Ascending aorta (tissue), 2 donors: ENCODE measurements at regions of chr15 and their contacts with region 1.

Region 1: DNA sequence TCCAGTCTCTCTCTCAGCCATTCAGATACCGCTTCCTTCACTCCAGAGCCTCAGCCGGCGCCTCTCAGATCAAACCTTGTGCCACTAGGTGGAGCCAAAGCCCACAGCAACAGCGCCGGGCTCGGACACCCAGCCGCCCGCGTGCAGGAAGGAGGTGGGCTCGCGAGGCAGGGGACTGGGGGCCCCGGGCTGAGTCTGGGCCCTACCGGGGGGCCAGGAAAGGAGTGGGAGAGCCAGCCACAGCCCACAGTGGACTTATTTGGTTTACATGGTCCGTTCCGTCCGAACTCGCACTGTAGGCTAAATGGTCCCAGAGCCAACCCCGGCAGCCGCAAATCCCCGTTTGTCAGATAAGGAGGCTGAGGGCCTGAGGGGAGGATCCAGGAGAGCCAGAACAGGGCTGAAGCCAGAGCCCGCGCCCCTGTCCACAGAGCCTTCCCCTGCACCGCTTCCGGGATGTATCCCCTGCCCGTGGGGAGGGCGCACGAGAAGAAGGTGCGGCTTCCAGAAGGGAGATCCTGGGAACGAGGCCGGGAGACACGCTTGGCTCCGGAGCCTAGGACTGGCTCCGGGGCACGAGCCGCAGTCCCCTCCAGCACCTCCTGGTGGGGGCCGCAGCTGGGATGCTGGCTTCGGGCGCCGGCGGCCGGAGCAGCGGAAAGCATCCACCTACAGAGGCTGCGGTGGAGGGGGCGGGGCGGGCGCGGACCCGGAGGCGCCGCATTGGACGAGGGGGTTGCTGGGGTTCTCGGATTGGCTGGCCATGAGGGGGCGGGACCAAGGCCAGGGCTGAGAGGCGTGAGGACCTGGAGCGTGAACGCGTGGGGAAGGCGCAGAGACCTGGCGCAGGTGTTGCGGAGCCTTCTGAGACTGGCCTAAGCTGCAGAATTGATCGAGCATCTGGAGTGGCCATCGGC is 6.5 kb upstream of the CYP11A1 start:
- DNase-seq: peak; percentile 75 to 96
- H3K4me3 ChIP-seq: peak overlapping the region; percentile 63 to 84
- H3K27ac ChIP-seq: peak overlapping the region; percentile 22 to 34
- H3K4me1 ChIP-seq: peaks cover 4 to 12% of the 10 kb centered on the region in 2 donors
- H3K27me3 ChIP-seq: no peaks in the 10 kb centered on the region
- CTCF ChIP-seq: peak; percentile 82 to 90 (median 87)

Region 2: GRCh38 chr15:74193305-74193718 is 180.7 kb before region 1 on chr15:
- intact Hi-C with region 1: no loop called
- DNase-seq: no peak
- H3K4me3 ChIP-seq: no peak overlapping the region
- H3K27ac ChIP-seq: no peak overlapping the region
- H3K4me1 ChIP-seq: peaks cover 0 to 3% of the 10 kb centered on the region in 2 donors
- H3K27me3 ChIP-seq: no peaks in the 10 kb centered on the region
- CTCF ChIP-seq: no peak

Region 3: GRCh38 chr15:74438721-74439316 is 64.8 kb after region 1 on chr15:
- intact Hi-C with region 1: loop called (anchors 1 kb)
- DNase-seq: peak in 1 of 2 donors; percentile 80
- H3K4me3 ChIP-seq: no peak overlapping the region
- H3K27ac ChIP-seq: no peak overlapping the region
- H3K4me1 ChIP-seq: peaks cover 0 to 6% of the 10 kb centered on the region in 2 donors
- H3K27me3 ChIP-seq: no peaks in the 10 kb centered on the region
- CTCF ChIP-seq: peak; percentile 79 to 89 (median 87)

Region 4: DNA sequence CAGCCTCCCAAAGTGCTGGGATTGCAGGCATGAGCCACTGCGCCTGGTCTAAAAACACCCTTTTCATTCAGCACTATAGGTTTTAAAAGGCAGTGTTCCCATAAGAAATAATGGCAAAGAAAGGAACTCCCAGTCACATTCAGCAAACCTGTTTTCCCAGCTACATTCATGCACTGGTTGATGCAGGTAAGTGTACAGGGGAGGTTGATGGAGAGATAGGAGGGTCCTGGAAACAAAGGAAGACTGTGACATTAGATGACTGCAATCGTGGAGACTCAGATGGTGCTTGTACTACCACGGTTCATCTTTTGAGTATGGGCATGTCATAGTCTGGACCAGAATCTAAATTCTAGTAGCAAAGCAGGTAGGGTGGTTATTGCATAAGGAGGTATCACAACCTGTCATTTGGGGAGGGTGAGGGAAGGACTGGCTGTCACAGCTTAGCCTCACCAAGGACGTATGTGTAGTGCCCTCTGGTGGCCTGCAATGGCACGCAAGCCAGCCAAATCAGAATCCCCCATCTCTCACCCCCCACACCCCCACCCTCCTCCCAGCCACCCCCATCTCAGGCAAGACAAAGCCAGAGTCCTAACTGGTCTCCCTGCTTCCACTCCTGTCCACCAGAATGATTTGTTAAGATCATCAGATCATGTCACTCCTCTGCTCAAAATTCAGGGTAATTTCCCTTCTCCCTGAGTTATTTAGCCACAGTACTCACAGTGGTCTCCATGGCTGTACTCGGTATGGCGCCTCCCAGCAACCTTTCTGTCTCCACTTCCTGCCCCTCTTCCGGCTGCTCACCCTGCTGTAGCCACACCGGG is 115.7 kb after region 1 on chr15:
- intact Hi-C with region 1: loop called (anchors 1 kb)
- DNase-seq: peak in 1 of 2 donors; percentile 64
- H3K4me3 ChIP-seq: no peak overlapping the region
- H3K27ac ChIP-seq: no peak overlapping the region
- H3K4me1 ChIP-seq: no peaks in the 10 kb centered on the region
- H3K27me3 ChIP-seq: no peaks in the 10 kb centered on the region
- CTCF ChIP-seq: peak; percentile 34 to 64 (median 41)

Region 5: DNA sequence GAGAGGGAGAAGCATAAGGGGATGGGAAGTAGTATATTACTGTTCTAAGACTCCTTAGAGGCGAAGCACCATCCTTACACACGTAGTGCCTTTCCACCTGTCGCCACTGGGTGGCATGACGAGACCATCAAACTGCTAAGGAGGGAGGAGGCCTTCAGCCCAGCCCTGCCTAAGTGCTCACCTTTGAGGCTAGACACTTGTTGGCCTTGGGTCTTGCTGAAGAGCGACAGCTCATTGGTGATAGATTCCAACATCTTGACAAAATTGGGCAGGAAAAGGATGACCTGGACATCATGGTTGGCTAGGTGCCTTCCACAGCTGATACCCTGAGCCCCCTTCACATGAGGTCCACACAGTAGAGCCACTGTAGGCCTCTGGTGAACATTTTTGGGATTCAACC is 261.2 kb after region 1 on chr15:
- intact Hi-C with region 1: loop called (anchors 5 kb)
- DNase-seq: no peak
- H3K4me3 ChIP-seq: no peak overlapping the region
- H3K27ac ChIP-seq: no peak overlapping the region
- H3K4me1 ChIP-seq: no peaks in the 10 kb centered on the region
- H3K27me3 ChIP-seq: no peaks in the 10 kb centered on the region
- CTCF ChIP-seq: peak; percentile 76 to 83 (median 81)

Region 6: DNA sequence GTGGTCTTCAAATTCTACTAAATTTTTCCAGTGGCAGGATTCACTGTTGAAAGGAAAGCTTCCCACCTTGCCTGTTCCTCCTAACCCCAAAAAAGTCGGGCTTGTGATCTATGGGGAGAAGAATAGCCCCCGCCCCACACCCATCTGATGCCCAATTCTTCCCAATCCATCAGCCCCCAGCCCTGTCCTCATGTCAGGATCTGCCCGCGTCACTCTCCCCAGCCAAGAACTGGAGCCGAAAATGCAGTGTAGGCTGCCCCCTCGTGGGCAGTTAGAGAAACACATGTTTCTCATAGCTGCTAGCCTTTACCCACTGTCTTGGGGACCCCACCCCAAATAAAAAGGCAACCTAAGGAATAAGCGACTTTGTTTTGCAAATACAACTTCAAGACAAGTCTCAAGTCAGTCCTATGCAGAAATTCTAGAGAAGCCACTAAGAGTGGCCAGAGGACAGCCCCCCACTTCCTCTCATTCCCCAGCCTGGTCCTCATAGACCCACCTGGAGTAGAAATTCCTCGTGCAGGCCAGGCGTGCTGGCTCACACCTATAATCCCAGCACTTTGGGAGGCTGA is 394.9 kb after region 1 on chr15:
- intact Hi-C with region 1: loop called (anchors 2 kb)
- DNase-seq: no peak
- H3K4me3 ChIP-seq: no peak overlapping the region
- H3K27ac ChIP-seq: no peak overlapping the region
- H3K4me1 ChIP-seq: no peaks in the 10 kb centered on the region
- H3K27me3 ChIP-seq: no peaks in the 10 kb centered on the region
- CTCF ChIP-seq: peak; percentile 83 to 93 (median 88)

Region 7: GRCh38 chr15:74956648-74957300 is 582.8 kb after region 1 on chr15 and contains the start of gene RPP25:
- intact Hi-C with region 1: loop called (anchors 10 kb)
- DNase-seq: peak; percentile 36 to 89
- H3K4me3 ChIP-seq: peak within 1 kb of the TSS; percentile 71 to 84
- H3K27ac ChIP-seq: peak within 1 kb of the TSS; percentile 91 to 94
- H3K4me1 ChIP-seq: peaks cover 7 to 16% of the 10 kb centered on the region in 2 donors
- H3K27me3 ChIP-seq: no peaks in the 10 kb centered on the region
- CTCF ChIP-seq: no peak
- total RNA-seq, gene RPP25: 28.4 TPM